Gastrocnemius medialis (tissue), 4 donors: ENCODE measurements at regions of chr16 and their contacts with region 1.

Region 1: DNA sequence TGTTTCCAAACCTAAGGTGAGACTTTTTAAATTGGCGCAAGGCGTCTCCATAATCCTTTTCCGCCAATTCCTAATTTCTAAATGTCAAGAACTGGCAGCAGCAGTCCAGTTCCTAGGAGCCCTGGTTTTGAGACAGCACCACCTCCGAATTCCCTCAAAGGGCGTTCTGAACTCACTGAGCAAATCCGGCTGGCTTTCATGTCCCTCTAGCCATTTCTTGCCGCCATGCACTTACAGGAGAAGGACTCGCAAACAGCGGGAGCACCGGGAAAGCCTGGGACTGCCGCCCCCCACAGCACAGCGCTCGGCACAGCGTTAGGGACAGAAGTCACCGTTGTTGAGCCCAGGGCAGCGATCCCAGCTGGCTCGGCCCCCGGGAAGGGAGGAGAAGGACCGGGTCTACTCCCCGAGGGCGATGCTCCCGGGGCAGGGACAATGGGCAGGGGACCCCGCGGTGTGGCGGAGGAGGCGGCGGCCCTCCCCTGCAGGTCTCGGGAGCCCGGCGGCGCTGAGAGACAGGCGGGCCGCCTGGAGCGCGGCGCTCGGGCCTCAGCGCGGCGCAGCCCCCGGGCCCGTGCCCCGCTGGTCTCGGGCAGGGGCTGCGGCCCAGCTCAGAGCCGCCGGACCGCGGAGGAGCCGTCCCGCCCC is 545 bp downstream of the ARHGAP17 start:
- DNase-seq: peak; percentile 20 to 50
- ATAC-seq: peak; percentile 60 to 63
- H3K4me3 ChIP-seq: peak overlapping the region; percentile 75 to 83 (median 78)
- H3K27ac ChIP-seq: peak overlapping the region; percentile 86 to 97 (median 90)
- H3K4me1 ChIP-seq: peaks cover 46 to 47% of the 10 kb centered on the region in 2 donors
- H3K27me3 ChIP-seq: no peaks in the 10 kb centered on the region
- CTCF ChIP-seq: no peak
- POLR2A ChIP-seq: no peak

Region 2: DNA sequence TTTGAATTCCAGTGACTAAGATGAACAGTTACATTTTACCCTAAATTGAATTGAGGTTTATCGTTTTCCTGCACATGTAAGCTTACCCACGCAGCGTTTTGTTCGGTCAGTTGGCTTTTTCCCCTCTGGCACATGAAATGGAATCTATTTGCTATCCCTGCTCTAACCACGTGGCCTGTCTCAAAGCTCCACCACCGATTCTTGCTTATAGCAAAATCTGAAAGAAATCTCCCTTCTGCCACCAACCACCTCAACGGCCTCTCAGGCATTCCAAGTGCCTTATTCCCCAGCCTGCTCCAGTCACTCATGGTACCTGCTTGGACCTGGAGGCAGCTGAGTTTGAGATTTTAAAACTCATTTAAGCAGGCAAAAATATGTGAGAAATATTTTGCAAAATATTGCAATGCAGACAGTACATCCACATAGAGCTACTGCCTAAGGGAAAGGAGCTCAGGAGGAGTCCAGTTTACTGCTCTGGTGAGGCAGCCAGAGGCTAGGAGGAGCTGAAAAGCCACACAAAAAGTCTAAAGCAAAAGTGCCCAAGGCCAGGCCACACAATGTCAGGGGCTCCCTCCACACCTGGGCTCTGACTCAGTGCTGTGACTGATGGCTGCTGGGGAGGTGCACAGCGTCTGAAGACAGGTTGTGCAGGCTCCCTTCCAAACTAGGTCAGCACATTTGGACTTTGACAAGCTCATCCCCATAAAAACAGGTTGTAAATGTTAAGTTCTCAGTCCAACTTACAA is 25.9 kb before region 1 on chr16:
- in situ Hi-C with region 1: no loop called
- intact Hi-C with region 1: loop called (anchors 2 kb)
- DNase-seq: no peak
- ATAC-seq: peak in 1 of 2 donors; percentile 22
- H3K4me3 ChIP-seq: peak overlapping the region in 2 of 4 donors; percentile 1 to 27
- H3K27ac ChIP-seq: peak overlapping the region; percentile 76 to 89 (median 82)
- H3K4me1 ChIP-seq: peaks cover 93 to 95% of the 10 kb centered on the region in 2 donors
- H3K27me3 ChIP-seq: no peaks in the 10 kb centered on the region
- CTCF ChIP-seq: no peak
- POLR2A ChIP-seq: no peak

Region 3: DNA sequence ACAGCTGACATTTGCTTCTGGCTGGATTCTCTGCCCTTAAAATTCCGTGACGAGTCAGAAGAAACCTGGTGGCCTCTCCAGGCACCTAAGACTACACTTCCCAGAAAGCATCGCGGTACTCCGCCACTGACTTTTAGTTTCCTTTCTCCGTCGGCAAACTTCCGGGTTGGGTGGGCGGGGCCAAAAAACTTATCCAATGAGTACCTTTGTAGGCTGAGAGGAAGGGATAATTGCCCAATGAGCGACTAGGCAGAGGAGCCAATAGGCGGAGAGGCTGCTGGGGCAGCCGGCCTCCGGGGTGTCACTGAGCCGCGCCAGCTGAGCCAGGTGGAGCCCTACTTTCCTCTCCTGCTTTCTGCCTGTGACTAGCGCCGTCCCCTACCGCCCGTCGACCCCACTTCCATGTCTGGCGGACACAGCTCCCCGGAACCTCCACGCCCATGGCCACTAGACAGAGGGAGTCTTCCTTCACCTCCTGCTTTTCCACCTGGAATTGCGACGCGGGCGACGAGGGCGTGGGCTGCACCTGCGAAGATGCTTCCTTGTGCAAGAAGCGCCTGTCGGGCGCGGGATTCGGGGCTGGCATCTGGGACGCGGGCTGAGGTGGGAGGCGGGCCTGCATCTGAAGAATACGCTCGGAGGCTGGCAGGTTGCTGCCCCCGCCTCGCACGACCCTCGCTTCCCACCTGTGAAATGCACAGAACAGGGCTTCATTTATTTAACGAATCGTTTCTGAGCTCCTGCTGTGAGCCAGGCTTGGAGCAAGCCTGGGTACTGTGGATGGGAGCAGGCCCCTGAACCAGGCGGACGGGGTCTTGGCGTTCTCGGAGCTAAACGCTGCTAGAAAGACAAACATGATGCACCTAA is 17.1 kb after region 1 on chr16:
- in situ Hi-C with region 1: no loop called
- intact Hi-C with region 1: loop called (anchors 1 kb)
- DNase-seq: peak; percentile 91 to 93
- ATAC-seq: peak; percentile 99 to 100
- H3K4me3 ChIP-seq: peak overlapping the region; percentile 73 to 85 (median 80)
- H3K27ac ChIP-seq: peak overlapping the region; percentile 75 to 88 (median 82)
- H3K4me1 ChIP-seq: peaks cover 8 to 11% of the 10 kb centered on the region in 2 donors
- H3K27me3 ChIP-seq: no peaks in the 10 kb centered on the region
- CTCF ChIP-seq: peak in 1 of 5 experiments; percentile 13
- POLR2A ChIP-seq: peak; percentile 63

Region 4: DNA sequence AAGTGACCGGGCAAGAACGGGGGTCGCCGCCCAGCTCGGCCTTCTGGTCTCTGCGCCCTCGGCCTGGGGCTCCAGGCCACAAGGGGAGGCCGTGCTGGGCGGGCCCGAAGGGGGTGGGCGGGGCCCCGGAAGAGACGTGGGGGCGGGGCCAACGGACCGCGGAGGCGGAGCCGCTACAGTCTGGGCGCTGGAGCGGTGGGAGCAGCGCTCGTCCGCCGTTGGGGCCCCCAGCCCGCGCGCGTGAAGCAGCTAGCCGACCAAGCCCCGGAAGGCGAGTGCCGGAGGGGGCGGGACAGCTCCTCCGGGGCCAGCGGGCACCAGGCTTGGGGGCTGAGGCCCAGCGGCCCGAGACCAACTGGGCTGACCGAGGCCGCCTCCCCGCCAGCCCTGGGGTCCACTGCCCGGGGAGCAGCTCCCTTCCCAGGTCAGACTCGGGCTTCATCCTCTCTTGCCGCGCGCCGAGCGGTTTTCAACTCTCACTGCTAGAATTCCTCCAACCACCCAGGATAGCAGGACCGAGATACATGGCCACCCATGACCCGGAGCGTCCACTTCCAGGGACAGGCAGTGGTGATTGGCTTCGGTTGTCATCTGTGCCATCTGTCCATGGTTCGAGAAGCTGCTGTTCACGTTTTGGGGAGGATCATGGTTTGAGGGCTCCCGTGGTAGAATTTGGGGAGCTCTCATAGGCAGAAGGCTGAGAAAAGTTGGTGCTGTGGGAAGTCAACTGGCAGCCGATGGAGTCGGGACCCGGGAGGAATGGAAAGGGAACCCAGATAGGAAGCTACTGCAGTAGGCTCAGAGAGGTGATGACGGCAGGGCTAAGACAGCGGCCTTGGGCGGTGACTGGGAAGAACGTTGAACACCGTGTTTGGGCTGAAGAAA is 52.4 kb after region 1 on chr16:
- in situ Hi-C with region 1: no loop called
- intact Hi-C with region 1: loop called (anchors 2 kb)
- DNase-seq: peak; percentile 65 to 79
- ATAC-seq: peak; percentile 91 to 94
- H3K4me3 ChIP-seq: peak overlapping the region; percentile 75 to 99 (median 91)
- H3K27ac ChIP-seq: peak overlapping the region; percentile 87 to 96 (median 94)
- H3K4me1 ChIP-seq: peaks cover 14 to 15% of the 10 kb centered on the region in 2 donors
- H3K27me3 ChIP-seq: no peaks in the 10 kb centered on the region
- CTCF ChIP-seq: peak in 1 of 5 experiments; percentile 23
- POLR2A ChIP-seq: peak; percentile 78 to 80

Region 5: DNA sequence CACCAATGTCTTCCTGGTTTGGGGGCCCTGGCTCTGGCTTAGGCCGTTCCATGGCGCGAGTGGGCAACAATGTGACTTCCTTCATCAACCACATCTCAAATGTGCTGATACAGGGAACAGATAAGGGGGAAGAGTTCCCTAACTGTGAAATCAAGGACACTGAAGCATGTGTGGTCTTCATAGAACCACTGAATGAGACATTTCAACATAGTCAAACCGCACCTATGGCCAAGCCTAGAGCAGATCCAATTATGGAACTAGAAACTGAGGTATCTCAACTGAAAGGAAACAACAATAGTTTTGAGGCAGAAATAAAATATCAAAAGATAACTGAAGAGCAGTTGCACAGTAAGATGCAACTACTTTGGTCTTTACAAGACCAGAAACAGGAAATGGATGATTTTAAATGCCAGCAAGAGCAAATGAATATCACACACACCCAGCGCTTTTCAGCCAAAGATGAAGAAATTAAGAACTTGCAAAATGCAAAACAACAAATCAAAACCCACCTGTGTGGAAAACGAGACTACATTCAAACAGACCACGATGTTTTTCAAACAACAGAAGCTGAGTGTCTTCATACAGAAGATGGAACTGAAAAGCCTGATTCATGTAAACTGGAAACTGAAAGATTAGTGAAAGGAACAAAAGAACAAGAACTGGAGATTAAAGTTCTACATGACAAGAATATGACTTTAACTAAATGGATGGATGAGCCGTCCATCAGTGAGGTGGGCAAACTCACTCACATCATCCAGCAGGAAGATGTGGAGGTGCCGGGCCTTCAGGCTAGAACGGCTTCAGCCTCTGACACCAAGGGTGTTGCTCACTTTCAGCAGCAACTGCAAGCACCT is 78.8 kb after region 1 on chr16:
- in situ Hi-C with region 1: no loop called
- intact Hi-C with region 1: no loop called
- DNase-seq: no peak
- ATAC-seq: no peak
- H3K4me3 ChIP-seq: no peak overlapping the region
- H3K27ac ChIP-seq: no peak overlapping the region
- H3K4me1 ChIP-seq: no peaks in the 10 kb centered on the region
- H3K27me3 ChIP-seq: no peaks in the 10 kb centered on the region
- CTCF ChIP-seq: no peak
- POLR2A ChIP-seq: no peak

Region 6: DNA sequence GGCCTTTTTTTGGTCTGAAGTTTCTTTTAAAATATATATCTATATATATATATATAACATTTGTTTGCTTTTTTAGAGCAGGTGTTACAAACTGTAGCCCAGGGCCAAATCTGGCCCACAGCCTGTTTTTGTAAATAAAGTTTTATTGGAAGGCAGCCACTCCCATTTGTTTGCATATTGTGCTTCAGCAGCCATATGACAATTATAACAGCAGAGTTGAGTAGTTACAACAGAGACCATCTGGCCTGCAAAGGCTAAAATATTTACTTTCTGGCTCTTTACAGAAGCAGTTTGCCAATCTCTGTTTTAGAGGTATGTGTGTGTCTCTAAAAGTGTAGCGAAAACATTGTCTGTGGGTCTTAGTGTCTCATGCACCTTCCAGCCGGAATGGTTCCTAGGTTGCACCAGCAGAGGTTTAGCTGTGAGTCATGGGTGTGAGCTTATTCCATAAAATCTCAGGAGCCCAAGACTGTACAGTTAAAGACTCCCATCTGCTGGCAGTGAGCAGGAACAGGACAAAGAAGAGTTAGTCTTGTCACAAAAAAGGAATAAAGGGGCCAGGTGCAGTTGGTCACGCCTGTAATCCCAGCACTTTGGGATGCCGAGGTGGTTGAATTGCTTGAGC is 120.7 kb after region 1 on chr16:
- in situ Hi-C with region 1: no loop called
- intact Hi-C with region 1: no loop called
- DNase-seq: no peak
- ATAC-seq: no peak
- H3K4me3 ChIP-seq: no peak overlapping the region
- H3K27ac ChIP-seq: no peak overlapping the region
- H3K4me1 ChIP-seq: no peaks in the 10 kb centered on the region
- H3K27me3 ChIP-seq: no peaks in the 10 kb centered on the region
- CTCF ChIP-seq: no peak
- POLR2A ChIP-seq: no peak

Region 7: DNA sequence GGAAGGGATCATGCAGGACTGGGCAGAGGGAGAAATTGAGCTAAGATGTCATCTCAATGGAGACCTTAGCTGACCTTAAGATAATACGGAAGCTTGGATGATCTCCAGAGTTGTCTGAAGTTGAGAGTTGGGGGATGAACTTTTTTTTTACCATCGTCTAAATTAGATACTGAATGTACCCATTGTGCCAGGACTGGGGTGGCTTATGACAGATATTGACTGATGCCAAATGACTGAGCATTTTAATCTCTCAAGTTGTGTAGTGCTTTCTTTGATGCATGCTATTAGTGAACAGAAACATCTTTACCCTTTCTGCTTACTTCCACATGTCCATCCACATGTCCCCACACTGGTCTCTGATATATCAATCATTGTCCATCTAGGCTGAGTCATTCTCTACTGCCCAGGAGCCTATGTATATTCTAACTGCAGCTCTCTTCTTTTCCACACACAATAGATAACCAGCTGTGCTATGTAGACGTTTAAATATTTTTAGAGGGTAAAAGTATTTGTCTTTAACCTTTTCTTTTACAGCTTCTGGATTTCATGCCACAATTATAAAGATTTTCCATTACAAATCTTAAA is 303.2 kb after region 1 on chr16:
- in situ Hi-C with region 1: no loop called
- intact Hi-C with region 1: no loop called
- DNase-seq: no peak
- ATAC-seq: no peak
- H3K4me3 ChIP-seq: no peak overlapping the region
- H3K27ac ChIP-seq: no peak overlapping the region
- H3K4me1 ChIP-seq: no peaks in the 10 kb centered on the region
- H3K27me3 ChIP-seq: no peaks in the 10 kb centered on the region
- CTCF ChIP-seq: no peak
- POLR2A ChIP-seq: no peak